Pancreas (tissue), 10 donors: ENCODE measurements at regions of chr9 and their contacts with region 1.

Region 1: GRCh38 chr9:32384364-32385151 is at the start of gene ACO1:
- DNase-seq: peak; percentile 89 to 97 (median 94)
- ATAC-seq: peak; percentile 93 to 98 (median 96)
- H3K4me3 ChIP-seq: peak within 1 kb of the TSS; percentile 54 to 89 (median 80)
- H3K27ac ChIP-seq: peak within 1 kb of the TSS; percentile 73 to 87 (median 85)
- H3K4me1 ChIP-seq: peaks cover 25 to 32% (median 29%) of the 10 kb centered on the region in 3 donors
- H3K27me3 ChIP-seq: no peaks in the 10 kb centered on the region
- CTCF ChIP-seq: no peak
- total RNA-seq, gene ACO1: 27.0 to 35.6 (median 31.2) TPM

Region 2: DNA sequence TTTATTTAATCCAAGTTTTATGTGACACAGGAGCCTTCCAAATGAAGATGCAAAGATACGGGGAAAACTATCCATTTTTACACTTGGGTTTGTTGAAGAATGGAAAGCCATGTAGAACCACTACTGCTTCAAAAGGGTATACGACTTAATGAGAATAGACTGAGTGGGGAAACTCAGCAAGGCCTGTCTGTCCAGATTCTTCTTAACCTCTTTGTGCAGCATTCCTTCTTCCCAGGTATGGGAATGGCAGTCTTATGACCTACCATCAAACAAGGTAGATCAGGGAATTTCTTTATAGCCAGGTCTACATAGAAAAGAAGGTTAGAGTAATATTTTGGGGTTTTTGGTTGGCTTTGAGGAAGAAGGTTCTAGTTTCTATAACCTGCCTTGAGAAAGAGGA is 593.5 kb after region 1 on chr9:
- intact Hi-C with region 1: loop called in 2 of 3 experiments (anchors 5 to 10 kb)
- DNase-seq: no peak
- ATAC-seq: no peak
- H3K4me3 ChIP-seq: no peak overlapping the region
- H3K27ac ChIP-seq: no peak overlapping the region
- H3K4me1 ChIP-seq: no peaks in the 10 kb centered on the region
- H3K27me3 ChIP-seq: no peaks in the 10 kb centered on the region
- CTCF ChIP-seq: no peak